ENCODE measurements at regions of chr14 and their contacts with region 1.

Region 1: GRCh38 chr14:95319312-95320021 is at the start of gene CLMN:
- DNase-seq: peak in 1 of 10 donors; percentile 74
- H3K4me3 ChIP-seq: peak within 1 kb of the TSS; percentile 61 to 99 (median 85)
- H3K27ac ChIP-seq: peak within 1 kb of the TSS; percentile 79 to 100 (median 96)
- H3K27me3 ChIP-seq: no peaks in the 10 kb centered on the region
- CTCF ChIP-seq: peak in 4 of 56 donors; percentile 7 to 19 (median 16)
- total RNA-seq, gene CLMN: 22.3 to 262 (median 78.6) TPM

Region 2: DNA sequence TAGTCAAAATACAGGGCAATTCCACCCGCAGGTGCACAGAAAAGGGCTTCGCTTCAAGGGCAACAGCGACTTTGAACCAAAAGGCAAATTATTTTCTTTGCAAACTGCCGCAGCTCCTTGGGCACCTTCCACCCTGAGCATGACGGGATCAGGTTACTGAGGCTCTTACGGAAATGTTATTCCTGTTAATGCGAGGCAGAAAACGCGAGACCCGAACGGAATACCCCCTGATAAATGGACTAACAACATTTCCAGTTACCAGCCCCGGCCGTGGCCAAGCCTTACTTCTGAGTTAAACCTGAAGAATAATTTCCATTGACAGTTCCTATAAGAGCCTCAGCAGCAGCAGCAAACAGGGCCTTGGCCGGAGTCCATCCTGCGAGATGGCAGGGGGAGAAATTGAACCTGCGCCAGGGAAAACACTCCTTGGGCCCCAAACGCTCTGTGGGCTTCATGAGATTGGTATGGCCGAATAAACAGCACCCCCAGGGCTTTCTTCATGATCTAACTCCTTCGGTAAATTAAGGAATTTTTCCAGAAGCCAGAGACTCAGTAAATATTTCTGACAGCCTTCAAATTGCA is 92.1 kb before region 1 on chr14:
- intact Hi-C with region 1: loop called (anchors 5 to 10 kb)
- DNase-seq: no peak
- H3K4me3 ChIP-seq: no peak overlapping the region
- H3K27ac ChIP-seq: peak overlapping the region in 39 of 59 donors; percentile 1 to 68 (median 36)
- H3K27me3 ChIP-seq: no peaks in the 10 kb centered on the region
- CTCF ChIP-seq: no peak

Region 3: GRCh38 chr14:95356245-95356869 is 36.9 kb after region 1 on chr14:
- intact Hi-C with region 1: loop called (anchors 2 to 5 kb)
- DNase-seq: no peak
- H3K4me3 ChIP-seq: no peak overlapping the region
- H3K27ac ChIP-seq: peak overlapping the region in 2 of 59 donors; percentile 2 to 13
- H3K27me3 ChIP-seq: peaks cover 0 to 13% (median 0%) of the 10 kb centered on the region in 45 donors
- CTCF ChIP-seq: no peak

Region 4: DNA sequence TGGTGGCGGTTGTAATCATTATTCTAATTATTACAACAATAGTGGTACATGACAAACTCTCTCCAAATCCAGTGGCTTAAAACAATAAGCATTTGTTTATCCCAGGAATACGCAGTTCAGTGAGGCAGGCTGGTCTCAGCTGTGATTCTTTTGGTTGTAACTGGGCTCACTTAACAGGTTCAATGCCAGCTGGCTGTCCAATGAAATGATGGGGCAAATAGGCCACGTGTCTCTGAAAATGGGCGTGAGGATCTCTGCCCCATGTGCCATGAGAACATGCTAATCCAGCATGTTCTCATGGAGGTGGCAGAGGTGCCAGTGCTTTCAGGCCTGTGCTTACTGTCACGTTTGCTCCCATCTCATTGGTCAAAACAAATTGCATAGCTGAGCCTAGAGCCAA is 73.4 kb after region 1 on chr14:
- intact Hi-C with region 1: loop called in 1 of 2 experiments (anchors 2 kb)
- DNase-seq: peak in 1 of 10 donors; percentile 29
- H3K4me3 ChIP-seq: no peak overlapping the region
- H3K27ac ChIP-seq: peak overlapping the region in 18 of 59 donors; percentile 1 to 65 (median 28)
- H3K27me3 ChIP-seq: no peaks in the 10 kb centered on the region
- CTCF ChIP-seq: no peak

Measured in dorsolateral prefrontal cortex (tissue), 120 donors.